ENCODE measurements at regions of chr18 and their contacts with region 1.

Region 1: DNA sequence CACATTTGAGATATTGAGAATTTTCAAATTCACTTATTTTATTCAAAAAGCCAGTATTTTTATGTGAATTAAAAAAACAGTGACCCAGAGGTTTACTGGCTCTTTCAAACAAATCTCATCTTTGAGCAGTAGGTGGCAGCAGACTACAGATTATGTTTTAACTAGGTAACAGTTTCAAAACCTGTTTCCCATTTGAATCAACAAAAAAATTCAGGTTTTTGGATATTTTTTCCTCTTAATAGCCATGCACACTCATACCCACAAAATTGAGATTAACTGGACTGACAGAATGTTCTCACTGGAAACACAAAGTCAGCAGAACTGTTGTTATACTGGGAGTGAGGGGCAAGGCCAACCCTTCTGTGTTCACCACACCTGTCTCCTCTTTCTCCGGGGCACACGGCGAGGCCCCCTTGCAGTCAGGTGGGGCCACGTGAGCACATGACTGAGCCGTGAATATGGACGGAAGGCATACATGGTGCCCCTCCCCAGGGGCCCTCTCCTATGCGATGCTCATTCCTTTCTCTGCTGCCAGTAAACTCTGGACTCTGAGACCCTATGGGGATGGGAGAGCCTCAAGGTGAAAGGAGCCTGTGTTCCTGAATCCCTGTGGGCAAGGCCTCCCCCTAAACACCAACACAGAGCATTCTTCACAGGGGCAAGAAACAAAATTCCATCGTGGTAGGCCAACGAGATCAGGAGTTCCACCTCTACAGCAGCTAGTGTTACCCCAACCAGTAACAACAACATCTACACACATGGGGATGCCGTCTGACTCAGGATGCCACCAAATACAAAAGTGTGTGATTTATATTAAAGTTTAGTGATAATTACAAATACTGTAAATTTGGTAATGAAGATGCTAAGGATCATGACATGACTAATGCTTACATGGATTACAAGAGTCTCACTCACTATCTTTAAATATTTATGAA is 80.4 kb downstream of the LPIN2 start:
- DNase-seq: no peak
- ATAC-seq: peak; percentile 60
- H3K4me3 Mint-ChIP-seq: peak overlapping the region; percentile 10
- H3K27ac Mint-ChIP-seq: peak overlapping the region; percentile 76
- H3K4me1 Mint-ChIP-seq: peaks cover 29% of the 10 kb centered on the region
- H3K27me3 Mint-ChIP-seq: no peaks in the 10 kb centered on the region

Region 2: GRCh38 chr18:2827061-2827460 is 105.5 kb before region 1 on chr18:
- CTCF ChIA-PET with region 1: no interaction called
- DNase-seq: no peak
- ATAC-seq: no peak
- H3K4me3 Mint-ChIP-seq: no peak overlapping the region
- H3K27ac Mint-ChIP-seq: no peak overlapping the region
- H3K4me1 Mint-ChIP-seq: no peaks in the 10 kb centered on the region
- H3K27me3 Mint-ChIP-seq: peaks cover 6% of the 10 kb centered on the region

Region 3: GRCh38 chr18:2948038-2948437 is 15.5 kb after region 1 on chr18:
- CTCF ChIA-PET with region 1: interaction called, 10 read pairs
- DNase-seq: no peak
- ATAC-seq: no peak
- H3K4me3 Mint-ChIP-seq: no peak overlapping the region
- H3K27ac Mint-ChIP-seq: no peak overlapping the region
- H3K4me1 Mint-ChIP-seq: peaks cover 42% of the 10 kb centered on the region
- H3K27me3 Mint-ChIP-seq: no peaks in the 10 kb centered on the region

Region 4: GRCh38 chr18:2978646-2979045 is 46.1 kb after region 1 on chr18:
- CTCF ChIA-PET with region 1: interaction called, 11 read pairs
- DNase-seq: peak; percentile 59
- ATAC-seq: peak; percentile 20
- H3K4me3 Mint-ChIP-seq: peak overlapping the region; percentile 73
- H3K27ac Mint-ChIP-seq: peak overlapping the region; percentile 91
- H3K4me1 Mint-ChIP-seq: peaks cover 82% of the 10 kb centered on the region
- H3K27me3 Mint-ChIP-seq: no peaks in the 10 kb centered on the region

Region 5: GRCh38 chr18:3129053-3129864 is 196.7 kb after region 1 on chr18:
- CTCF ChIA-PET with region 1: interaction called, 17 read pairs
- DNase-seq: peak; percentile 87
- ATAC-seq: peak; percentile 97
- H3K4me3 Mint-ChIP-seq: no peak overlapping the region
- H3K27ac Mint-ChIP-seq: no peak overlapping the region
- H3K4me1 Mint-ChIP-seq: peaks cover 12% of the 10 kb centered on the region
- H3K27me3 Mint-ChIP-seq: no peaks in the 10 kb centered on the region

Region 6: GRCh38 chr18:3245853-3246634 is 313.5 kb after region 1 on chr18:
- CTCF ChIA-PET with region 1: interaction called, 10 read pairs
- DNase-seq: peak; percentile 90
- ATAC-seq: peak; percentile 56
- H3K4me3 Mint-ChIP-seq: peak overlapping the region; percentile 92
- H3K27ac Mint-ChIP-seq: peak overlapping the region; percentile 99
- H3K4me1 Mint-ChIP-seq: peaks cover 24% of the 10 kb centered on the region
- H3K27me3 Mint-ChIP-seq: peaks cover 4% of the 10 kb centered on the region

Region 7: DNA sequence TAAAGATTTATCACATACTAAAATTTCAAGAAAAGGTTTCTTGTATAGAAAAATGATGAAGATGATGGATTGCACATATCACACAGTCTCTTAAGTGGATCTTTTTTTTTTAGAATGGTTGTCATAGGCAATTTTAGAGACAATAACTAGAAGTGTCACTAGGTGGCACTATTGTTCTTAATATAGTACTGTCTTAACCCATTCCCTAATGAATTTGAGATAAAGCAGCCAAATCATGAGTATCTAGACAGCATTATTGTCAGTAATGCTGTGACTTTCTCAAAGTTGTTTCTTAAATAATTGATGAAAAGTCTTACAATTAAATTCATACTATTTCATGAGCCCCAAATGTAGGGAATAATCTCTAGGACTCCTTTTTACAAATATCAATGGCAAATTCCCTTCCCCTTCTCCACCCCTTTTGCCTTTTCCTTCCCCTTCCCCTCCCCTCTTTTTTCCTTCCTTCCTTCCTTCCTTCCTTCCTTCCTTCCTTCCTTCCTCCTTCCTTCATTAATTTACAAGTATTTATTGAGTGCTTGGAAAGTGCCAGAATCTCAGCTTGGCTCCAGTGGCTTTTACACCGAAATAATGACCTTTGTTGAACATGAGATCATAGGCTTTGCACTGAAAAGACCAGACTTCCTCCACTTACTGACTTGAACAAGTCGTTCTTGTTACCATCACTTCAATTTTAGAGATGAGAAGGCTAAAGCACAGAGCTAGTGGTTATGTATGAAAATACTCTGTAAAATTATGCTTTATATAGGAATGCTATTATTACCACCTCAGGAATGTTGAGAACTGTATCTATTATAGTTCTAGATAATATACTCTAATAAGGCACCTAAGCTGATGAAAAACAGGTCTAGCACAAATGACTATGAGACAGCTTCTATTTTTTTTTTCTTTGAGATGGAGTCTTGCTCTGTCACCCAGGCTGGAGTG is 349.2 kb after region 1 on chr18:
- CTCF ChIA-PET with region 1: no interaction called
- DNase-seq: no peak
- ATAC-seq: peak; percentile 87
- H3K4me3 Mint-ChIP-seq: no peak overlapping the region
- H3K27ac Mint-ChIP-seq: no peak overlapping the region
- H3K4me1 Mint-ChIP-seq: no peaks in the 10 kb centered on the region
- H3K27me3 Mint-ChIP-seq: peaks cover 2% of the 10 kb centered on the region

Measured in activated CD8-positive, alpha-beta memory T cell treated with anti-CD3 and anti-CD28 coated beads, Interleukin-2, amount 10 ng/mL, durations not matched to agents 7 days and 5 days (primary cell).